BJ (cell line): ENCODE measurements at regions of chr5 and their contacts with region 1.

Region 1: DNA sequence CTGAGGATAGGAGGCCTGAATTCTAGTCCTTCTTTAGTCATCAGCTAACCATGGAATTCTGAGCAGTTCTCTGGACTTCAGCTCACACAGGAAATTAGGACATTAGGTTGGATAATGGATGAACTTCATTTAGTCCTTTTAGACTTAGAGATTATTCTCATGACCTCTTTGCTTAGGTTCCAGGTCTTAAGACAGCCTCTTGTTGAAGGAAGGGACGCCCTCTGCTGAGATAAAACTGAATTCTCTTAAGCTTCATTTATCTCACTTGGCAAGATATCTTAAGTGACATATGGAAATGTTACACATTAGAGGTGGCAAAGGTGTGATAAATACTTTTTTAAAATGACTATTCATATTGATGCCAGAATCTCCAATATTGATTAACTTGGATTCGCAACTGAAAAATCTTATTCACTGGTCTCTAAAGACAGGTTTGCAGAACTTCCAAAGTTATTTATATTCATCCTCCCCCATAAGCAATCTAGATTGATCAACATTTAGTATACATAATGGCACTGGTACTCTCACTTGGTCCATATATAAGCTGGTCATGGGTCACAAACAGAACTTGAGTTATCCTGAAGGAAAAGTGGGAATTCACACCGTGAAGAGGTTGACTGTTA is 16.9 kb upstream of the ZNF366 start:
- DNase-seq: peak; percentile 40
- H3K4me3 ChIP-seq: no peak overlapping the region
- H3K27me3 ChIP-seq: no peaks in the 10 kb centered on the region
- CTCF ChIP-seq: peak; percentile 55

Region 2: GRCh38 chr5:72328172-72328571 is 195.9 kb before region 1 on chr5:
- CTCF ChIA-PET with region 1: no interaction called
- POLR2A ChIA-PET with region 1: no interaction called
- DNase-seq: no peak
- H3K4me3 ChIP-seq: no peak overlapping the region
- H3K27me3 ChIP-seq: no peaks in the 10 kb centered on the region
- CTCF ChIP-seq: no peak

Region 3: DNA sequence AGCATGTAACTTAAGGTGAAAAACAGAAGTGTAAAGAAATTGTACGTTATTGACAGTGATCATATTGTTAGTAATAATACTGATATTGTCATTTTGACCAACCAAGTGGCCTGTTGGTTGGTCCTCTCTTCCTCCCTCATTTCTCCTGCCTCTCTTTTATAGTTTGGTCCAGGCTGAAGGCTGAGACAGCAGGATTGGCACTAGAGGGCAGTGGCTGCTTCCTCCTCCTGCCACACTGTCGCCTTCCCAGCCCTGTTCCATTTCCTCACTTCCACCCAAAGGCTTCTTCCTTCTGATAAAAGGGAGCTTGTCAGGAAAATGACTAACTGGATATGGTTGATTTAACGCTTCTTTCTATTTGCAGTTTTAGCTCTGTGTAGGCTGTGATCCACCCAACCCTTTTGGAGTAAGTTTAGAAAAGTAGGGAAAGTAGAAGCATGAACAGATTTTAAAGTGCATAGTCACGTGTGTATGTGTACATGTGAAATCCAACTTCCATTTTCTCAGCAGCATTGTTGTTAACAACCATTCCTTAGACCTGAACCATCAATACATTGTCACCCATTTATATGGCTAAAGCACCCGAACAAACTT is 168.3 kb before region 1 on chr5:
- CTCF ChIA-PET with region 1: interaction called, 13 read pairs
- POLR2A ChIA-PET with region 1: no interaction called
- DNase-seq: no peak
- H3K4me3 ChIP-seq: no peak overlapping the region
- H3K27me3 ChIP-seq: no peaks in the 10 kb centered on the region
- CTCF ChIP-seq: peak; percentile 61

Region 4: DNA sequence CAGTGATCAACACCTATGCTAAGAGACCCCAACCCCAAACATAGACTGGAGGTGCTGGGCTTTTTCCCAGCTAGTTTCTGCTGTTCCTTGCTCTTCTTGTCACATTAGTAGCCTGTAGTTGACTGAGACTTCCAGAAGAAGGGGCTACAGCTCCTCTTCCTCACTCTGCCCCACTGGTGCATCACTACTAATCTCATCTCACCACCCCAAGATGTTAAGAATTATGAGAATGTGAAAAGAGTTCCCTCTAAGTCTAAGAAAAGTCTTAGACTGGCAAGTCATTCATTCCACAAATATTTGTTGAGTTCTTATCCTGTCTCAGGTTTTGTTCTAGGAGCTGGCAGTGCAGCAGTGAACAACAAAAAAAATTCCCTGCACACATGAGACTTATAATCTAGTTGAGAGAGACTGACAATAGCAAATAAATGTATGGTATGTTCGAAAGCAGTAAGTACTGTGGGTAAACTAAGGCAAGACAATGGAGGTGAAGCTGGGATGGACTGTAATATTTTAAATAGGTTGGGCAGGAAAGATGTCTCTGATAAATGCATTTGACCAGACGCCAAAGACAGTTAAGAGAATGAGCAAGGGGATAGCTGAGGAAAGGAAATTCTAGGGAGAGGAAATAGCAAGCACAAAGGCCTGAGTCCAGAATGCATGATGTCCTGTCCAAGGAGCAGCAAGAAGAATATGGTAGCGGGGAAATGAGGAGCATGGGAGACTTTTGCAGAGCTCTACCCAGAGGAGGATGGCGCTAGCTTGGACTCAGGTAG is 111.6 kb before region 1 on chr5:
- CTCF ChIA-PET with region 1: interaction called, 31 read pairs
- POLR2A ChIA-PET with region 1: no interaction called
- DNase-seq: peak; percentile 39
- H3K4me3 ChIP-seq: no peak overlapping the region
- H3K27me3 ChIP-seq: no peaks in the 10 kb centered on the region
- CTCF ChIP-seq: peak; percentile 60

Region 5: DNA sequence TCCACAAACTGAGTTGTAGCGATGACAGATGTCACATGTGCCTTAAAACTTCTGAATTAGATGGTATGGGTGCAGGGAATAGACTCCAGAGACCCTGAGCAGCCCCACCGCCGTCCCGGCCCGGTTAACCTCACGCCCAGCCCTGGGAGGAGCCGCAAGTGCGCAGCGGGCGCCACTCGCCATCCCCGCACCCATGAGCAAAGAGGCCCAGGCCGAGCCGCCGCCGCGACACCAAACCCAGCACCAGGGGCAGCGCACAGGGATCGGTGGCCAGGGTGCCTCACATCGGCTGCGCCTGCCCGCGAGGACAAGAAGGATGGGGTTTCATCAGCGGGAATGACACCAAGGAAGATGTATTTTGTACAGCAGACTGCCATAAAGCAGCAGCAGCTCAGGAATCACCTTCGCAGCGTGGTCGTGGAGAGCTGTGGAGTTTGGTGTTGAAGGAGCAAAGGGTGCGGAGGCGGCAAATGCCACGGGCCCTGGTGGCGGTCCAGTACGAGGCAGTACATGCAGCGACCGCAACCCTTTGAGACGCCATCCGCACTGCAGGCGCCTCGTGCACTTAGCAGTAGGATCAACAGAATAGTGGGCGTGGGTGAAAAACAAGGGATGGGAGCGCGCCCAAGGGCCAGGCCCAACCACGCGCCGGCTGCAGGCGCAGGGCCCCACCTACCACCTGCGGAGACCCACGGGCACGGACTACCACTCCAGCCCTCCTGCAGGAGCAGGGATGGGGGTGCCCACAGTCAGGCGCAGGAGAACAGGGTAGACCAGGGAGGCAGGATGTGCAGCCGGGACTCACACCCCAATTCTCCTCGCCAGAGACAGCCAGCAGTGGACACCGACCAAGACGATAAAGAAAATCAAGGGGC is 106.5 kb before region 1 on chr5:
- CTCF ChIA-PET with region 1: interaction called, 31 read pairs
- POLR2A ChIA-PET with region 1: no interaction called
- DNase-seq: no peak
- H3K4me3 ChIP-seq: no peak overlapping the region
- H3K27me3 ChIP-seq: no peaks in the 10 kb centered on the region
- CTCF ChIP-seq: no peak

Region 6: DNA sequence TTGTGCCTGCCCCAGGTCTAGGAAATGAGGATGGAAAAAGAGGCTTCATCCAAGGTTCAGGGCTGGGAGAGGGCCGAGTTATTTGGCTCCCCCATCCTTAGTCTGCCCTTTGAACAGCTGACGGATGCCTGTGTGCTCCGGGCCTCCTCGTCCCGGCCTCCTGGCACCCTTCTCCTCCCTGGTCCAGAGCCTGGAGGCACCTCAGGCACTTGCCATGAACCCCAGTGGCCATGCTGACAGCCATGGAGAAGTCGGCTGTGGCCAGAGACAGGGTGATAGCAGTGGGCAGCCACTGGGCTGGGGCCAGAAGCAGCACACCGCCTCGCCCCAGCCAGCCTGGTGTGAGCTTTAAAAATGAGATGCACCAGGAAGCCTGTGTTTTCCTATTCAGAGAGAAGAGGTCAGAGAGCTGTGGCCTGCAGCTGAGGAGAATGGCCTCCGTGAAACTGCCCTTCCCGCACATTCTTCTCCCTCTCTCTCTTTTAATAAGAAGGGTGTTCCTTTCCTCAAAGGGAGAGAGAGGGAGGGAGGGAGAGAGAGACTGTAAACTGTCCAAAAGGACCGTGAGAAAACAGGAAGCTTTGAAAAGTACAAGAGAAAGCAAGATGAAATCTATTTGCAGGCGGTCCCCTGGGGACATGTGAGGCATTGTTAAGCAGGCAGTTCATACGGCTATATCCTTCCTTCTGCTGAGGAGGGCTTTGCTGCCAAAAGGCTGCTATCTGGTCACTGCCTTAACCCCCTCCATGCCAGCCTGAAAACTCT is 72.1 kb before region 1 on chr5:
- CTCF ChIA-PET with region 1: interaction called, 12 read pairs
- POLR2A ChIA-PET with region 1: no interaction called
- DNase-seq: peak; percentile 92
- H3K4me3 ChIP-seq: no peak overlapping the region
- H3K27me3 ChIP-seq: no peaks in the 10 kb centered on the region
- CTCF ChIP-seq: no peak